ENCODE measurements at regions of chr12 and their contacts with region 1.

Region 1: GRCh38 chr12:12645485-12645884 is 33.8 kb downstream of the CREBL2 start:
- DNase-seq: peak; percentile 62
- CTCF ChIP-seq: peak; percentile 36

Region 2: GRCh38 chr12:12624498-12624992 is 20.9 kb before region 1 on chr12:
- CTCF ChIA-PET with region 1: interaction called, 13 read pairs
- POLR2A ChIA-PET with region 1: no interaction called
- DNase-seq: no peak
- CTCF ChIP-seq: no peak

Region 3: DNA sequence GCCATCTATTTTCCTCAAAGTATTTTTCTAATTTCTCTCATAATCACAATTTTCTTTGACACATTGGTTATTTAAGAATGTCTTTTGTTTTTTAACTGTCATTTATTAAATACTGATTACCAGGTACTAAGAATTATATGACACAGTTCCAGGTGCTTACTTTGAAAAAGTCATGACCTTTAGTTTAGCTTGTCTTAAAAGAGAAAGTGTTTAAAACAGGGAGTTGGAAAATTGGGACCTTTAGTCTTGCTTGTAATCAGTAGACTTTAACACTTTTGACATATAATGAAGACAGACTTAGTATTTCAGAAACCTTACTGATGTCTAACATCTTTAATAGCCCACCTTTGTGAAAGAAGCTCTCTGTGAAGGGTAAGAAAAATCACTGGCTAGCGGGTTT is 14.6 kb before region 1 on chr12:
- CTCF ChIA-PET with region 1: interaction called, 22 read pairs
- POLR2A ChIA-PET with region 1: no interaction called
- DNase-seq: no peak
- CTCF ChIP-seq: no peak

Region 4: GRCh38 chr12:12661086-12661485 is 15.6 kb after region 1 on chr12:
- CTCF ChIA-PET with region 1: interaction called, 50 read pairs
- POLR2A ChIA-PET with region 1: no interaction called
- DNase-seq: no peak
- CTCF ChIP-seq: no peak